ENCODE measurements at regions of chr4 and their contacts with region 1.

Region 1: GRCh38 chr4:70885174-70885573 is 17.0 kb upstream of the MOB1B start:
- DNase-seq: no peak
- H3K4me3 ChIP-seq: no peak overlapping the region
- H3K27ac ChIP-seq: no peak overlapping the region
- H3K4me1 ChIP-seq: no peaks in the 10 kb centered on the region
- H3K27me3 ChIP-seq: no peaks in the 10 kb centered on the region
- CTCF ChIP-seq: no peak

Region 2: DNA sequence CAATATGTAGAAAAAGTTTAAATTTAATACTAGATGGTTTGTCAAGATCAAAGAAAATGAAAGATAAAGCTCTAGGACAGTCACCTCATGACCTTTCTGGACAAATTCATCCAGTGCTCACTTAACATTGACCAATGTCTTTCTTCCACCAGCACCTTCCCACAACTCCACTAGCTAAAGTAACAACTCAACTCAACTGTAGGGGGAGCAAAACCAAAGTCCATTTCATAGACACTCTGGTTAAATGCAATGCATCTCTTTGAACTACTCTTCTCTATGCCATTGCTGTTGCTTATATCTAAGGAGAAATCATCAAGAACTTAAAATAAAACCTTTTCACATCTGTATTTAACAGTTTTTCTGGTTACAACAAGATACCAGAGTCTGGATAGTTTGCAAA is 1414.6 kb before region 1 on chr4:
- CTCF ChIA-PET with region 1: no interaction called
- POLR2A ChIA-PET with region 1: interaction called, 11 read pairs
- intact Hi-C with region 1: no loop called
- DNase-seq: peak; percentile 0
- H3K4me3 ChIP-seq: no peak overlapping the region
- H3K27ac ChIP-seq: no peak overlapping the region
- H3K4me1 ChIP-seq: no peaks in the 10 kb centered on the region
- H3K27me3 ChIP-seq: no peaks in the 10 kb centered on the region
- CTCF ChIP-seq: 0 out of 2 replicates have a peak, but pooled peaks have one; percentile 18

Region 3: GRCh38 chr4:70601422-70602039 is 283.6 kb before region 1 on chr4:
- CTCF ChIA-PET with region 1: no interaction called
- POLR2A ChIA-PET with region 1: no interaction called
- intact Hi-C with region 1: no loop called
- DNase-seq: peak; percentile 68
- H3K4me3 ChIP-seq: no peak overlapping the region
- H3K27ac ChIP-seq: no peak overlapping the region
- H3K4me1 ChIP-seq: no peaks in the 10 kb centered on the region
- H3K27me3 ChIP-seq: no peaks in the 10 kb centered on the region
- CTCF ChIP-seq: peak; percentile 71

Region 4: DNA sequence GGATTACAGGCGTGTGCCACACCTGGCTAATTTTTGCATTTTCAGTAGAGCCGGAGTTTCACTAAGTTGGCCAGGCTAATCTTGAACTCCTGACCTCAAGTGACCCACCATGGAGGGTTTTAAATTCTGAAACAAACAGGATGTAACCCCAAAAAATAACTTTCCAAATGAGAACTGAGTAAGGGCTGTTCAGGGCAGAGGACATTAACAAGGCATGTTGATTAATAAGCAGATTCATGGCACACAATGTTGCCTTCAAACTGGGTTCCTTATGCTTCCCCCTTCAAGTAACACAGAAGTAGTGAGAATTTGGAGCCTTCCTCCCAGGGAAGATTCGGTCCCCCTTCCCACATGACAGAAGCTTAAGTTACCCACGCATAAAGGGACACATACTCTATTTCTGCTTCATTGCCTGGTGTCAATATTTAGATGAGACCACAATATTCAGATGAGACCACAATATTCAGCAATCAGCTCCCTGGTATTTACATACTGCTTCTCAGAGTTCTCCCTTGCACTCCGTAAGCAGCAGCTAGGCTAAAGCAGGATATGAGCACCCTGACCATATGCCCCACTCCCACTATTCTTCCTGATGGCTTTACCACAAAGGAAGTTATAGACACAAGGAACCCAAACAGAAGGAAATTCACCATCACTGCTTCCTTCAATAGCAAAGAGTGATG is 66.9 kb before region 1 on chr4:
- CTCF ChIA-PET with region 1: no interaction called
- POLR2A ChIA-PET with region 1: no interaction called
- intact Hi-C with region 1: no loop called
- DNase-seq: no peak
- H3K4me3 ChIP-seq: no peak overlapping the region
- H3K27ac ChIP-seq: no peak overlapping the region
- H3K4me1 ChIP-seq: no peaks in the 10 kb centered on the region
- H3K27me3 ChIP-seq: no peaks in the 10 kb centered on the region
- CTCF ChIP-seq: no peak

Measured in A673 (cell line).